Activated CD4-positive, alpha-beta memory T cell treated with anti-CD3 and anti-CD28 coated beads, Interleukin-2, amount 10 ng/mL, durations not matched to agents 7 days and 5 days (primary cell): ENCODE measurements at regions of chr7 and their contacts with region 1.

Region 1: GRCh38 chr7:140358412-140359051 is 39.8 kb downstream of the SLC37A3 start:
- DNase-seq: peak; percentile 60
- H3K4me3 Mint-ChIP-seq: peak overlapping the region; percentile 77
- H3K27ac Mint-ChIP-seq: peak overlapping the region; percentile 96
- H3K4me1 Mint-ChIP-seq: peaks cover 35% of the 10 kb centered on the region
- H3K27me3 Mint-ChIP-seq: no peaks in the 10 kb centered on the region

Region 2: GRCh38 chr7:140218651-140219050 is 139.9 kb before region 1 on chr7:
- CTCF ChIA-PET with region 1: no interaction called
- POLR2A ChIA-PET with region 1: no interaction called
- DNase-seq: no peak
- H3K4me3 Mint-ChIP-seq: no peak overlapping the region
- H3K27ac Mint-ChIP-seq: no peak overlapping the region
- H3K4me1 Mint-ChIP-seq: peaks cover 39% of the 10 kb centered on the region
- H3K27me3 Mint-ChIP-seq: no peaks in the 10 kb centered on the region

Region 3: GRCh38 chr7:140384894-140385545 is 26.5 kb after region 1 on chr7:
- CTCF ChIA-PET with region 1: interaction called, 3 read pairs
- POLR2A ChIA-PET with region 1: interaction called, 25 read pairs
- DNase-seq: no peak
- H3K4me3 Mint-ChIP-seq: no peak overlapping the region
- H3K27ac Mint-ChIP-seq: no peak overlapping the region
- H3K4me1 Mint-ChIP-seq: peaks cover 34% of the 10 kb centered on the region
- H3K27me3 Mint-ChIP-seq: no peaks in the 10 kb centered on the region

Region 4: DNA sequence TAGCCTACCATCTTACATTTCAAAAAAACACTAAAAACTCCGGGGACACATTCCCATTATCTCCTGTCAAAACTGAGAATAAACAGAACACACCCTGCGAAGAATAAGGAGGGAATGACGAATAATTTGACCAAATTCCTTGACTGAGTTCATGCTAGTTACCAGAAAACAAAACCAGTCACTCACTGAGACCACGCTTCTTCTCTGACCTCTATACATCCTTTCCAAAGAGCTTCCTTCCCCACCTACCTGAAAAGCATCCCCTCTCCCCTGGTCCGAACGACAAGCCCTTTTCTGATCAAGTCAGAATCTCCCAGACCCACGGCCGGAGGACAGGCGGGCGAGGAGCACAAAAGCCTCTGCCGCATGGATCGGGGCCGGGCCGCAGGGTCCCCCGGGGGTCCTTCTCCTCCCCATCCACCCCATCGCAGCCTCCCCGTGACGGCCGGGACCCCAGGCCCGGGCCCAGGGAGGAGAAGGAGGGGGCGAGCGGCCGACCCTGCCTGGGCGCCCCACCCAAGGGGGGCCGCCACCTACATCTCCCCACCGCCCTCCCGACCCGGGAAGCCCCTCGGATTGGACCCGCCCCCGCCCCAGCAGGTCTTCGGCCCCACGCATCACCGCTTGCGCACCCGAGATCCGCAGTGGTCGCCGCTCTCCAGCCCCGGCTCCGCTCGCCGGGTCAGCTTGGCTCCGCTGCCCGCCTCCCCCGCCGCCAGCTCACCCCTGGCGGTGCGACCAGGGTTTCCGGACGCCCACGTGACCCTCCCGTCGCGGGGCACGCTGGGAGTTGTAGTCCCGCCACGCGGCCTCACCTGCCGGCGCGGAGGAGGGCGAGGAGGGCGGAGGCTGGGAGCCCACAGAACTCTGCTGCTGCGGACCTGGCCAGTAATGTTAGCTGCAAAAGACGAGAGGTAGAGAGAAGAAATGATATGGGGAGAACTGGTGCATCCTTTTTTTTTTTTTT is 39.5 kb after region 1 on chr7 and contains the start of gene SLC37A3:
- CTCF ChIA-PET with region 1: no interaction called
- POLR2A ChIA-PET with region 1: interaction called, 15 read pairs
- DNase-seq: peak; percentile 89
- H3K4me3 Mint-ChIP-seq: peak within 1 kb of the TSS; percentile 92
- H3K27ac Mint-ChIP-seq: peak within 1 kb of the TSS; percentile 76
- H3K4me1 Mint-ChIP-seq: peaks cover 37% of the 10 kb centered on the region
- H3K27me3 Mint-ChIP-seq: no peaks in the 10 kb centered on the region
- total RNA-seq, gene SLC37A3: 28.8 to 30.7 TPM